Mammary epithelial cell (primary cell): ENCODE measurements at regions of chr19 and their contacts with region 1.

Region 1: DNA sequence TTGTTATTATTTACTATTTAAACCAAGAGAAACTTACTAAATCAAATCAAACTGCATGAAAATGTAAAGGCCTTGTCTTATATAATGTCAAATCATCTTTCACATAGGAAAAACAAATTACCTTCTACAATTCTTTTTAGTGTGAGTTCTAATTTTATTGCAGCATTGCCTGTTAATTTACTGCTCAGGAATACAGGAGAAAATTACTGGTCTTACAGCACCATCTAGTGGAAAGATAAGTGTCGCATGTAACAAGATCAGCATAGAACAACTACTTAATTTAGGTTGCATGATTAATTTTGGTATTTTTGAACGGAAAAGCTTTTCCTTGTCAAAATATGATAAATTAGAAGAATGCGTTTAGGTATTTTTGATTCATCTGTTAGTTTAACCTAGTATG is 502.7 kb downstream of the UQCRFS1 start:
- DNase-seq: peak; percentile 52
- H3K4me3 ChIP-seq: no peak overlapping the region
- H3K27ac ChIP-seq: no peak overlapping the region
- H3K4me1 ChIP-seq: peaks cover 7% of the 10 kb centered on the region
- H3K27me3 ChIP-seq: no peaks in the 10 kb centered on the region
- CTCF ChIP-seq: peak; percentile 64 to 73

Region 2: GRCh38 chr19:28242297-28242927 is 467.9 kb before region 1 on chr19:
- CTCF ChIA-PET with region 1: no interaction called
- dilution Hi-C with region 1: no loop called
- in situ Hi-C with region 1: no loop called
- intact Hi-C with region 1: loop called (anchors 2 kb)
- DNase-seq: peak; percentile 2
- H3K4me3 ChIP-seq: no peak overlapping the region
- H3K27ac ChIP-seq: no peak overlapping the region
- H3K4me1 ChIP-seq: no peaks in the 10 kb centered on the region
- H3K27me3 ChIP-seq: no peaks in the 10 kb centered on the region
- CTCF ChIP-seq: peak; percentile 62 to 78

Region 3: DNA sequence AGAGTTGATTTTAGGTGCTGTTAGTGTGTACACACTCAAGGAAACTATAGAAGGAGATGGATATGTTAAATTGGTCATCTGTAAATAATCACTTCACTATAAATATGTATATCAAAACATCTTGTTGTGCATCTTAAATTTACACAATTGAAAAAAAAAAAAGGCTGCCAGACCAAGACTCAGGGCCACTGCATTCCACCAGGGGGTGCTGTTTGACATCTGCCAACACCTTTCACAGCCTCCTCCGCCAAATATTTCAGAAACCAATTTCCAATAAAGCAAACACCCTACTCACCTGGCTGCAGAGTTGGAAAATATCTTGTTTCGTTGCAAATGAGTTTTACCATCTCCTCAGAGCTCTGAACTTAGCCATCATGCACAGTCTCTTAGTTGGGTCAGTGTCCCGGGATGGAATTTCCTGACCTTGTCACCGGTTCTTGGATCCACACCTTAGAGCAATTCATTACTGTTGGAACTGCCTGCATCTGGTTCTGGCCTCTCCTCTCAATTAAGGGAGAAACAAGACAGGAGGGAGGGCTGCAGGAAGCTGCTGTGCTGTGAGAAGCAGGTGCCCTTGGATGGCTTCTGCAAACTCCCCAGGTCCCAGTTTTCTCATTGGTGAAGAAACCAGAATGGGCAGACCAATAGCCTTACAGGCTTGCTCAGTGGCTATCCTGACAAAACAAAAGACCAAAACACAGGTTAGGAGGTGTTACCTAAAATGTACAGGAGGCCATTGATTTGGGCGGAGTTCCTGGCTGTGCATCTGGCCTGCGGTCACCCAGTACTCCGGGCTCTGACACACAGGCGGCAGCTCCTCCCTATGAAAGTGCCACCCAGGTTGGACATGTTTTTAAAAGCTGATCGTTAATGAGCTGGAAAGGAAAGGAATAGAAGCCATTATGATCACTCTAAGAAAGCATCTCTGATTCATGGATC is 243.9 kb before region 1 on chr19:
- CTCF ChIA-PET with region 1: interaction called, 4 read pairs
- dilution Hi-C with region 1: loop called (anchors 25 kb)
- in situ Hi-C with region 1: loop called in 1 of 2 experiments (anchors 5 kb)
- intact Hi-C with region 1: loop called (anchors 1 kb)
- DNase-seq: peak; percentile 35
- H3K4me3 ChIP-seq: no peak overlapping the region
- H3K27ac ChIP-seq: no peak overlapping the region
- H3K4me1 ChIP-seq: peaks cover 29% of the 10 kb centered on the region
- H3K27me3 ChIP-seq: no peaks in the 10 kb centered on the region
- CTCF ChIP-seq: peak; percentile 86 to 89